CD4-positive, alpha-beta memory T cell (primary cell): ENCODE measurements at regions of chr14 and their contacts with region 1.

Region 1: DNA sequence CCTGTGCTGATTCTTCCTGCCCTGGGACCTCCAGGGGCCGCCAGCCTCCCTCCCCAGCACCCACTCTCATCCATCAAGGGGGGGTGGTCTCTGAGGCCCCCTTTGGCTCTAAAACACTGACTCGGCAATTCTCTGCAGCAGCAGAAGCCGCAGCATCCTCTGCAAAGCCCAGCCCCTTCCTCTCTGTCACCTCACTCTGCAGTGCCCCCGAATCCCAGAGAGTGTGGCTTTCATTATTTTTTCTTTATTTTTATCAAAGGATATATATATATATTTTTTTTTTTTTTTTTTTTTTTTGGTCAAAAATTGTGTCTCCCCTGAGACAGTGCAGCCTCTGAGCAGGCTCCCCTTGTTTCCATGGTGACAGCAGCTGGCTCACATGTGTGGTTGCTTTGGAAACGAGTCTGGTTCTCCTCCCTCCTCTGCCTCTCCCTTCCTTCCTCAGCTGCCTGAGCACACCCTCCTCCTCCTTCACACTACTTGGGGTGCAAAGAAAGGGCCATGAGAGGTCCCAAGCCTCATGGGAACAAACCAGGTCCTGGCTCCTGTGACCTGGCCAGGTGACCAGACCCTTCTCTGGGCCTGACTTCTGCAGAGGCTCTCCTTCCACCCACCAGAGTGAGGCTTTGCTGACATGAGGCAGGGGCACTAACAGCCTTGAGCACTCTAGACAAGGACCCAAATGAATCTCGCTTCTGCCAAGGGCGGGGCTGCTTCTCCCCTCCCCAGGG is 100.5 kb downstream of the LRRC74A start:
- DNase-seq: peak; percentile 75 to 96 (median 83)
- H3K4me3 ChIP-seq: peak overlapping the region; percentile 3 to 51
- H3K4me3 Mint-ChIP-seq: peak overlapping the region; percentile 71 to 90 (median 82)
- H3K27ac ChIP-seq: peak overlapping the region; percentile 89
- H3K27ac Mint-ChIP-seq: peak overlapping the region; percentile 83 to 99 (median 97)
- H3K4me1 ChIP-seq: peaks cover 78% of the 10 kb centered on the region
- H3K4me1 Mint-ChIP-seq: peaks cover 59 to 97% (median 80%) of the 10 kb centered on the region in 4 donors
- H3K27me3 ChIP-seq: no peaks in the 10 kb centered on the region
- H3K27me3 Mint-ChIP-seq: no peaks in the 10 kb centered on the region

Region 2: DNA sequence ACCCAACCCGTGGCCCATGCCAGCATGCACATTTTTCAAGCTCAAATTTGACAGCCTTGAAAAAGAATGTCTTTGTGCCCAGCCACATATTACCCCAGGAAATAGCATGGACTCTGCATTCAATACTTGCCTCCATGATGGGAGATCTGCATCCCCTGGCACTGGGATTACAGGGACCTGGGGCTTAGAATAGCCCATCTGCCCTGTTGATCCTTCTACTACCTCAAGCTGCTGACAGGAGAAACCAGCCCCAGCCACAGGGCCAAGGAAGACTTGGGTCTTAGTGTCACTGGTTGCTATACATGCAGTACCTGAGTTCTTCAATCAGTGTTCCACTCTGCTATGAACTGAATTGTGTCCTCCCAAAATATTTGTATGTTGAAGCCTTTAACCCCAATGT is 15.2 kb before region 1 on chr14:
- CTCF ChIA-PET with region 1: interaction called, 41 read pairs
- POLR2A ChIA-PET with region 1: interaction called, 12 read pairs
- intact Hi-C with region 1: loop called (anchors 1 kb)
- DNase-seq: no peak
- H3K4me3 ChIP-seq: no peak overlapping the region
- H3K4me3 Mint-ChIP-seq: no peak overlapping the region
- H3K27ac ChIP-seq: no peak overlapping the region
- H3K27ac Mint-ChIP-seq: peak overlapping the region in 3 of 7 donors; percentile 30 to 69 (median 30)
- H3K4me1 ChIP-seq: peaks cover 37% of the 10 kb centered on the region
- H3K4me1 Mint-ChIP-seq: peaks cover 21 to 38% (median 22%) of the 10 kb centered on the region in 4 donors
- H3K27me3 ChIP-seq: no peaks in the 10 kb centered on the region
- H3K27me3 Mint-ChIP-seq: no peaks in the 10 kb centered on the region

Region 3: DNA sequence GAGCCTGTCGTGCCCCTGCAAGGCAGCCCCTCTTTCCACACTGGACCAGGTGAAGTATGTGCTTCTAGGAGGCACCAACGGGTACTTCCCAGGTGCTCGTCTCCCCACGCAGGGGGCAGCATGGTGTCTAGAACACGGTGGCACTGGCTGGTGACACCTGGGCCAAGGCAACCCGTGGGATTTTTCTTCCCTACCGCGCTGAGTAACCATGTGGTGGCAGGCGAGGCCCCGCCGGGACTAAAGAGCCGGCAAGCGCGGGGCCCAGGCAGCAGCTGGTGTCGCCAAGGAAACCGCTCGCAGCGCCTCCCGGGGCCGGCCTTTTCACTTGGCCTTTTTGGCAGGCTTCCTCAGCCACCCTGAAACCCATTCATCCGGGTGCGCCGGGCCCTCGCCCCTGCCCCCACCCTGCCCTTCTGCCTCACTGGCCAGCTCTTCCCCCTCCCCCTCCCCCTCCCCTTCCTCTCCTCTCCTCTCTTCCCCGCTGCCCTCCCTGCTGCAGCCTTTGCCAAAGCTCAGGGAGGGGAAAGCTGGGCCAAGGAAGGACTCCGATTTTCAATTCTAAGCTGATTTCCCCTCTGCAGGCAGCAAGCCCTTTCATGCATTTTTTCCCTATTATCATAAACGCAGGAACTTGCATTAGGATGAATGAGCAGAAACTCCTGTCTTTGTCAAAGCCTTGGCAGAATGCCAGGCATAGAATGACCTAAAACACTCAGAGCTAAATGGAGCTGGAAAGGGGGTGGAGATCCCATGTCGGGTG is 20.6 kb after region 1 on chr14:
- CTCF ChIA-PET with region 1: interaction called, 8 read pairs
- POLR2A ChIA-PET with region 1: interaction called, 11 read pairs
- intact Hi-C with region 1: loop called (anchors 2 kb)
- DNase-seq: peak; percentile 68 to 82 (median 72)
- H3K4me3 ChIP-seq: peak overlapping the region in 1 of 2 donors; percentile 19
- H3K4me3 Mint-ChIP-seq: peak overlapping the region in 7 of 8 donors; percentile 4 to 65 (median 57)
- H3K27ac ChIP-seq: peak overlapping the region; percentile 33
- H3K27ac Mint-ChIP-seq: peak overlapping the region; percentile 37 to 93 (median 87)
- H3K4me1 ChIP-seq: peaks cover 20% of the 10 kb centered on the region
- H3K4me1 Mint-ChIP-seq: peaks cover 16 to 39% (median 24%) of the 10 kb centered on the region in 4 donors
- H3K27me3 ChIP-seq: no peaks in the 10 kb centered on the region
- H3K27me3 Mint-ChIP-seq: no peaks in the 10 kb centered on the region

Region 4: GRCh38 chr14:77023001-77023996 is 96.6 kb after region 1 on chr14:
- CTCF ChIA-PET with region 1: no interaction called
- POLR2A ChIA-PET with region 1: interaction called, 38 read pairs
- intact Hi-C with region 1: loop called (anchors 1 kb)
- DNase-seq: no peak
- H3K4me3 ChIP-seq: peak overlapping the region in 1 of 2 donors; percentile 9
- H3K4me3 Mint-ChIP-seq: peak overlapping the region; percentile 30 to 73 (median 65)
- H3K27ac ChIP-seq: no peak overlapping the region
- H3K27ac Mint-ChIP-seq: peak overlapping the region; percentile 66 to 98 (median 83)
- H3K4me1 ChIP-seq: peaks cover 52% of the 10 kb centered on the region
- H3K4me1 Mint-ChIP-seq: peaks cover 26 to 49% (median 37%) of the 10 kb centered on the region in 4 donors
- H3K27me3 ChIP-seq: no peaks in the 10 kb centered on the region
- H3K27me3 Mint-ChIP-seq: no peaks in the 10 kb centered on the region

Region 5: GRCh38 chr14:77053046-77053841 is 126.6 kb after region 1 on chr14:
- CTCF ChIA-PET with region 1: interaction called, 360 read pairs
- POLR2A ChIA-PET with region 1: interaction called, 5 read pairs
- intact Hi-C with region 1: no loop called
- DNase-seq: peak; percentile 68 to 75 (median 69)
- H3K4me3 ChIP-seq: no peak overlapping the region
- H3K4me3 Mint-ChIP-seq: peak overlapping the region in 1 of 8 donors; percentile 51
- H3K27ac ChIP-seq: no peak overlapping the region
- H3K27ac Mint-ChIP-seq: peak overlapping the region in 6 of 7 donors; percentile 24 to 79 (median 49)
- H3K4me1 ChIP-seq: peaks cover 25% of the 10 kb centered on the region
- H3K4me1 Mint-ChIP-seq: peaks cover 16 to 36% (median 22%) of the 10 kb centered on the region in 4 donors
- H3K27me3 ChIP-seq: no peaks in the 10 kb centered on the region
- H3K27me3 Mint-ChIP-seq: no peaks in the 10 kb centered on the region